PC-9 (cell line): ENCODE measurements at regions of chr2 and their contacts with region 1.

Region 1: GRCh38 chr2:222944552-222944951 is 83.7 kb downstream of the ACSL3 start:
- DNase-seq: no peak
- H3K4me3 ChIP-seq: peak overlapping the region; percentile 2; the same call in 1 of the 2 replicates
- H3K27ac ChIP-seq: peak overlapping the region; percentile 69
- H3K4me1 ChIP-seq: peaks cover 42% of the 10 kb centered on the region
- H3K27me3 ChIP-seq: no peaks in the 10 kb centered on the region
- CTCF ChIP-seq: no peak

Region 2: GRCh38 chr2:222959336-222959735 is 14.8 kb after region 1 on chr2:
- CTCF ChIA-PET with region 1: interaction called, 20 read pairs
- POLR2A ChIA-PET with region 1: interaction called, 19 read pairs
- intact Hi-C with region 1: loop called (anchors 1 kb)
- DNase-seq: peak; percentile 96 to 98
- H3K4me3 ChIP-seq: no peak overlapping the region
- H3K27ac ChIP-seq: peak overlapping the region; percentile 55
- H3K4me1 ChIP-seq: peaks cover 18% of the 10 kb centered on the region
- H3K27me3 ChIP-seq: no peaks in the 10 kb centered on the region
- CTCF ChIP-seq: peak; percentile 79

Region 3: DNA sequence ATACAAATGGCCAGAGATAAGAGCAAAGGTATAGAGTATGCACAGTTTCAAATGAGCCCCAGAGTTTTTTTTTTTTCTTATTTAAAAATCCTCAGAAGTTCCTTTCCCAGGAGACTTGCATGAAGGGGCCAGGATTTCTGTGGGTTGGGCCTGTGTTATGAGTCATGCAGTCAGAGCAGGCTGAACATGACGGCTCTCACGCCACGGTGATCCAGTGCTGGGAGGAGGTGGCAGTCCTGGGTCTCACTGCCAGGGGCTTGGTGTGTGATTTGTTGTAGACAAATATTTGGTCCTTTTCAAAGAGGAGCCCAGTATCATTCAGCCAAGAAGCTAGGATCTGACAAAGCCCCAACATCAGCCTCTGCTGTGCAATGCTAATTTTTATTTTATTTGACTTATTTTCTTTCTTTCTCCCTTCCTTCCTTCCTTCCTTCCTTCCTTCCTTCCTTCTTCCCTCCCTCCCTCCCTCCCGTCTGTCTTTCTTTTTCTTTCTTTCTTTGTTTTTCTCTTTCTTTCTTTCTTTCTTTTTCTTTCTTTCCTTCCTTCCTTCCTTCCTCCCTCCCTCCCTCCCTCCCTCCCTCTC is 97.1 kb after region 1 on chr2:
- CTCF ChIA-PET with region 1: no interaction called
- POLR2A ChIA-PET with region 1: no interaction called
- intact Hi-C with region 1: no loop called
- DNase-seq: peak; percentile 90 to 92
- H3K4me3 ChIP-seq: peak overlapping the region; percentile 2; the same call in 1 of the 2 replicates
- H3K27ac ChIP-seq: peak overlapping the region; percentile 88
- H3K4me1 ChIP-seq: peaks cover 40% of the 10 kb centered on the region
- H3K27me3 ChIP-seq: no peaks in the 10 kb centered on the region
- CTCF ChIP-seq: no peak

Region 4: DNA sequence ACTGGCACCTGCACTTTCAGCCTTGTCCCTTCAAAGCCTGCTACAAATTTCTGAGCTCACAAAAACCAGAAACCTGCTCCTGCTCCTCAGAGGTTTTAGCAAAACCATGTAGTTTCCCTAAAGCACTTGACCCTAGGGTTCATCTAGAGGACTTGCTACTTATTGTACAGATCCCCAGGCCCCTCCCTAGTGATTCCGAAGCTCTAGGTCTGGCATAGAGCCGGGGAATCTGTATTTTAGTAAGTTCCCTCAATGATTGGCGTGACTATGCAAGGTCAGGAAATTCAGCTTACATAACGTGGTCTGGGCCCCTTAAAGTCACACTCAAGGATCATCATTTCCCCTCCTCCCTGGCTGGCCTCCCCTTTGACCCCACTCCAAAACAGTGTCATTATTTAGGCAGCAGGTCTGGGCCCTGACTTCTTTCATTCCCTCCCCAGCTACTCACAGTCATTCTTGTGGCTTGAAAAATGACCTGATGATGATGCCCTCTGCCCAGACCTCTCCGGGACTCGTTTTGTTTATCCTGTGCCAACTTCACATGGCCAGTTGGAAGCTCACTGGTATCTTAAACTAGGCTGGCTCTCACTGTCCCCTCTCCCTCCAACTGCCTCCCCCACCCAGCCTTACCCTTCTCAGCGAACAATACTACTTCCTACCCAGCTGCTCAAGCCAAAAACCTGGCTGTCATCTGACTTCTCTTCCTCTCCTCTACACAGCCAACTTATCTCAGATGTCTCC is 964.6 kb after region 1 on chr2:
- CTCF ChIA-PET with region 1: no interaction called
- POLR2A ChIA-PET with region 1: no interaction called
- intact Hi-C with region 1: no loop called
- DNase-seq: no peak
- H3K4me3 ChIP-seq: no peak overlapping the region
- H3K27ac ChIP-seq: no peak overlapping the region
- H3K4me1 ChIP-seq: no peaks in the 10 kb centered on the region
- H3K27me3 ChIP-seq: no peaks in the 10 kb centered on the region
- CTCF ChIP-seq: no peak